HEK293 (cell line): ENCODE measurements at regions of chr6 and their contacts with region 1.

Region 1: DNA sequence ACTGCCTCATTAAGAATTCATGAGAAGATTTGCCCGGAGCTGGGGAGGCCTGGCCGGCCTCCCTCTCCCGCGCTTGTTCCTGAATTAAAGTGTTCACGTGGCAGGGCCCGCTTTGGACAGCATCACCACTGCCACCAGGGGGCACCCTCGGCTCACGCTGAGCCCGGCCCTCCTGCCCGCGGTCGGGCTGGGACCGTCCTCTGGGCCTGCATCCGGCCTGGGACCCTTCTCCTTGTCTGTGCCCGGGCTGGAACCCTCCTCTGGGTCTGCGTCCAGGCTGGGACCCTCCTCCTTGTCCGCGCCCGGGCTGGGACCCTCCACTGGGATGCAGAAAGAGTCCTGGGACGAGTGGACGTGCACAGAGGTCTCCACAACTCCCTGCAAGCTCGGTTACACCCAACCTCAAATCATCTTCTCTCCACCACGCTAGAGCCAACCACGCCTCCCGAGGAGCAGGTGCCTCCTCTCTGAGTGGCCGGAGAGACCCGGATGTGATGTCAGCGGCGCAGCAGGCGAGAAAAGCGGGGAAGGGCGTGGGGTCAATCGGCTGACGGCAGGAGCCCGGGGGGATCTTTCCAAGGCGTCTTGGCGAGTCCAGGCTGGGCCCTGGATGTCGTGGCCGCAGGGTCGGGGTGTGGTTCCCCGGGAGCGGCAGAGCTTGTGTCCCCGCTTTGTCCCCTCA is 50.9 kb upstream of the DACT2 start:
- H3K4me3 ChIP-seq: no peak overlapping the region
- H3K27ac ChIP-seq: no peak overlapping the region
- H3K4me1 ChIP-seq: no peaks in the 10 kb centered on the region
- CTCF ChIP-seq: peak; percentile 87

Region 2: DNA sequence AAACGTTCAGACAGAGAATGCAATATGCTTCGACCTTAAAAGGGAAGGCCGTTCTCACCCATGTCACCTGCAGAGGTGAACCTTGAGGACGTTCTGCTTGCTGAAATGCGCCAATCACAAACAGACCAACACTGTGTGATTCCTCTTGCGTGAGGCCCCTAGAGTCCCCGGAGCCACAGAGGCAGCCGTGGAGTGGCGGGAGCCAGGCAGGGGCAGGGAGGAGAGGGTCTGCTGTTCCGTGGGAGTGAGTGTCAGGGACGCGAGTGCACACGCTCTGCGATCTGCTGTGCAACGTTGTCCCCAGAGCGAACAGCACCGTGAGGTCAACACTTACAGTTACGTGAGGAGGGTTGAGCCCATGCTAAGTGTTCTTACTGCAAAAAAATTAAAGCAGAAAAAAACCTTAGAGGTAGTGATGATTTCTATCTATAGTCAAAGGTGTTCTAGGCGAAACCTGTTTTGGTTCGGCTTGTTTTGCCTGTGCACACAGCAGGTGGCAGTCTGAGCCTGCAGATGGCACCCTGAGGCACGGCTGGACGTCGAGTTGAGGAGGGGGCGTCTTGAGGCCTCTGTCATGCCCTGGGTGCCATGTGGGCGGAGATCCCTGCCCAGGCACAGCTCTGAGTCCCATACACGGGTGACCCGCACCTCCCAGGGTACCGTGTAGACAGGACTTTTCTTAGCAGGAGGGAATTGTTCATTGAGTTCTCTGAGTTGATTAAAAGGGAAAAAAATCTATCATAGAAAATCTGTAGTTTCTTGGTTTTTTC is 219.7 kb before region 1 on chr6:
- CTCF ChIA-PET with region 1: interaction called, 17 read pairs
- POLR2A ChIA-PET with region 1: no interaction called
- H3K4me3 ChIP-seq: no peak overlapping the region
- H3K27ac ChIP-seq: no peak overlapping the region
- H3K4me1 ChIP-seq: peaks cover 13% of the 10 kb centered on the region; the same call in 1 of the 2 replicates
- CTCF ChIP-seq: peak; percentile 76

Region 3: GRCh38 chr6:168884050-168884645 is 513.7 kb after region 1 on chr6:
- CTCF ChIA-PET with region 1: interaction called, 45 read pairs
- POLR2A ChIA-PET with region 1: no interaction called
- H3K4me3 ChIP-seq: no peak overlapping the region
- H3K27ac ChIP-seq: no peak overlapping the region
- H3K4me1 ChIP-seq: no peaks in the 10 kb centered on the region
- CTCF ChIP-seq: no peak

Region 4: DNA sequence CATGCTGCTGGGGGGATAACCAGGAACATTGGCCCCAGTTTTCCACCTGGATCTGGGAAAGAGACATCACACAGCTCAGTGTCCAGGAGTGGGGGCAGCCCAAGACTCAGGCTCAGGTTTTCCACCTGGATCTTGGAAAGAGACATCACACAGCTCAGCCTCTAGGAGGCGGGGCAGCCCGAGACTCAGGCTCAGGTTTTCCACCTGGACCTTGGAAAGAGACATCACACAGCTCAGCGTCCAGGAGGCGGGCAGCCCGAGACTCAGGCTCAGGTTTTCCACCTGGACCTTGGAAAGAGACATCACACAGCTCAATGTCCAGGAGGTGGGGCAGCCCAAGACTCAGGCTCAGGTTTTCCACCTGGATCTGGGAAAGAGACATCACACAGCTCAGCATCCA is 521.6 kb after region 1 on chr6:
- CTCF ChIA-PET with region 1: interaction called, 13 read pairs
- POLR2A ChIA-PET with region 1: no interaction called
- H3K4me3 ChIP-seq: no peak overlapping the region
- H3K27ac ChIP-seq: no peak overlapping the region
- H3K4me1 ChIP-seq: no peaks in the 10 kb centered on the region
- CTCF ChIP-seq: no peak